ENCODE measurements at regions of chr7 and their contacts with region 1.

Region 1: GRCh38 chr7:39623018-39623731 is at the start of gene RALA:
- DNase-seq: peak; percentile 82 to 94 (median 88)
- ATAC-seq: peak; percentile 92
- H3K4me3 ChIP-seq: peak within 1 kb of the TSS; percentile 81
- H3K4me3 Mint-ChIP-seq: peak within 1 kb of the TSS; percentile 97
- H3K27ac ChIP-seq: peak within 1 kb of the TSS; percentile 82 to 85
- H3K27ac Mint-ChIP-seq: peak within 1 kb of the TSS; percentile 86
- H3K4me1 ChIP-seq: peaks cover 27% of the 10 kb centered on the region
- H3K4me1 Mint-ChIP-seq: peaks cover 52% of the 10 kb centered on the region
- H3K27me3 ChIP-seq: no peaks in the 10 kb centered on the region
- H3K27me3 Mint-ChIP-seq: no peaks in the 10 kb centered on the region
- CTCF ChIP-seq: no peak
- total RNA-seq, gene RALA: 24.5 to 27.5 TPM

Region 2: DNA sequence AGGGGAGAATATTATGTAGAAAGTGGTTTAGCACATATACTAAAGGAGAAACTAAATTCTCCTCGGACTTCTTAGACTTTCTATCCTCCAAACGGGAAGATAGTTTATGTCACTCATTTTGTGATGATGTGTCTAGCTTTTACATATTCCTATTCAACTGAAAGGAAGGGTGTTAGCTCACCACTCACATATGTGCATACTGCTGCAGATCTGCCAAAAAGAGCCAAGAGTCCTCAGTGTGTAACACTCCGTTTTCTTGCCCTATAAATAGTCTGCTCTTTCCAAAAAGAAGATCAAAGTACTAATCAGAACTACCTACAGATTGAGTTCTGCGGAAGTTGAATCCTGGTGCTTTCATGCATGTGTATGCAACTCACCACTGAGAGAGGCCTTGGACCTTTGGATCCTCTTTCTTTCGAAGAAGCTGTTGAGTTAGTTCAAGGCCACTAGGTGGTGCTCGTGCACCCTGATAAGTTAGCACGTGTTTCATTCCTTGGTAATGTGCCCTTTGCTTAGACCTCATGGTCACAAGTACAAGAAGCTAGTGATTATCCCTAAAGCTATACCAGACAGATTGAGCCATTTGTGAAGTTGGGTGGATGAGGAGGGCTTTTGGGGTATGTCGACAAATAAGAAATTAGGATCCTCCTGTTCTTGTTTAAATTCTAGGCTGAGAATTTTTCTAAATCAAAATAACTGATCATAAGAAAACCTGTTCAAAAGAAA is 42.9 kb before region 1 on chr7:
- CTCF ChIA-PET with region 1: interaction called, 22 read pairs
- POLR2A ChIA-PET with region 1: interaction called, 20 read pairs
- intact Hi-C with region 1: loop called in 1 of 2 experiments (anchors 5 kb)
- DNase-seq: peak; percentile 60 to 92 (median 70)
- ATAC-seq: peak; percentile 96
- H3K4me3 ChIP-seq: no peak overlapping the region
- H3K4me3 Mint-ChIP-seq: no peak overlapping the region
- H3K27ac ChIP-seq: no peak overlapping the region
- H3K27ac Mint-ChIP-seq: no peak overlapping the region
- H3K4me1 ChIP-seq: no peaks in the 10 kb centered on the region
- H3K4me1 Mint-ChIP-seq: peaks cover 9% of the 10 kb centered on the region
- H3K27me3 ChIP-seq: no peaks in the 10 kb centered on the region
- H3K27me3 Mint-ChIP-seq: no peaks in the 10 kb centered on the region
- CTCF ChIP-seq: peak; percentile 75

Region 3: GRCh38 chr7:39589323-39590111 is 33.7 kb before region 1 on chr7:
- CTCF ChIA-PET with region 1: interaction called, 5 read pairs
- POLR2A ChIA-PET with region 1: interaction called, 5 read pairs
- intact Hi-C with region 1: loop called (anchors 1 to 5 kb)
- DNase-seq: peak in 13 of 14 experiments; percentile 24 to 89 (median 46)
- ATAC-seq: peak; percentile 82
- H3K4me3 ChIP-seq: no peak overlapping the region
- H3K4me3 Mint-ChIP-seq: peak overlapping the region; percentile 2
- H3K27ac ChIP-seq: no peak overlapping the region
- H3K27ac Mint-ChIP-seq: peak overlapping the region; percentile 52
- H3K4me1 ChIP-seq: peaks cover 12% of the 10 kb centered on the region
- H3K4me1 Mint-ChIP-seq: peaks cover 27% of the 10 kb centered on the region
- H3K27me3 ChIP-seq: no peaks in the 10 kb centered on the region
- H3K27me3 Mint-ChIP-seq: no peaks in the 10 kb centered on the region
- CTCF ChIP-seq: no peak

Region 4: DNA sequence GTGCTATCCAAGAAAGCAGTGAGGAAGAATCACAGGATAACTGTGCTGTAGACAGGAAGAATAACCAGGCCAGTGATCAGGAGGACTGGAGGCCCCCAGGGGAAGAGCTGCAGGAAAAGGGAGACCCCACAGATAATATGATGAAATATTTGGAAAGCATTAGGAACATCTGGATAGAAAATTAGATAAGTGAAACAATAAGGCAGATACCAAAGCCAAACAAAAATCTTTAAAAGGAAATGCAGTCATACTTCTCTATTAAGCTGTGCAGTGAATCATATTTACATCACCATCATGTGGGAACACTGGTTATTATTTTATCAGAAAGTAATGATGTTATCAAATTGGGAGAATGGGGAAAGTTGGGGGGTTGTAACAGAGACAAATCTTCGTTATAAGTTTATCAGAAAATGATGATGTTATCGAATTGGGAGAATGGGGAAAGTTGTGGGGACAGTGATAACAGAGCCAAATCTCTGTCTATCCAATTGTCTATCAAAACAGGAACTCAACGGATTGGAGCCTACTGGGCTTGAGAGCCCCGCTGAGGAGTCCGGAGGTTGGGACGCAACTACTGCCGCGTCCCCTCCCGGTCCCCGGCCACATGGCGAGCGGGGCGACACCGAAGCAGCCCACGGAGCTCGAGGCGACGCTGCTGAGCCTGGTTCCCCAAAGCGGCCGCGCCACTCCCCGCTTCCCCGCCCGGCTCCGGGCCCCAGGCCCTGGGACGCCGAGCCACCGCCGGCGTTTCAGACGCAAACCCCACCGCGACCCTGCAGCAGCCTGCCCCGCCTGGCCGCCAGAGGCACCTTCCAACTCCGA is 13.9 kb before region 1 on chr7:
- CTCF ChIA-PET with region 1: interaction called, 8 read pairs
- POLR2A ChIA-PET with region 1: interaction called, 16 read pairs
- intact Hi-C with region 1: no loop called
- DNase-seq: peak in 6 of 14 experiments; percentile 11 to 47 (median 41)
- ATAC-seq: peak; percentile 52
- H3K4me3 ChIP-seq: peak overlapping the region; percentile 24
- H3K4me3 Mint-ChIP-seq: peak overlapping the region; percentile 67
- H3K27ac ChIP-seq: no peak overlapping the region
- H3K27ac Mint-ChIP-seq: no peak overlapping the region
- H3K4me1 ChIP-seq: peaks cover 10% of the 10 kb centered on the region
- H3K4me1 Mint-ChIP-seq: peaks cover 56% of the 10 kb centered on the region
- H3K27me3 ChIP-seq: peaks cover 4 to 8% of the 10 kb centered on the region in 2 experiments
- H3K27me3 Mint-ChIP-seq: peaks cover 21% of the 10 kb centered on the region
- CTCF ChIP-seq: no peak

Region 5: DNA sequence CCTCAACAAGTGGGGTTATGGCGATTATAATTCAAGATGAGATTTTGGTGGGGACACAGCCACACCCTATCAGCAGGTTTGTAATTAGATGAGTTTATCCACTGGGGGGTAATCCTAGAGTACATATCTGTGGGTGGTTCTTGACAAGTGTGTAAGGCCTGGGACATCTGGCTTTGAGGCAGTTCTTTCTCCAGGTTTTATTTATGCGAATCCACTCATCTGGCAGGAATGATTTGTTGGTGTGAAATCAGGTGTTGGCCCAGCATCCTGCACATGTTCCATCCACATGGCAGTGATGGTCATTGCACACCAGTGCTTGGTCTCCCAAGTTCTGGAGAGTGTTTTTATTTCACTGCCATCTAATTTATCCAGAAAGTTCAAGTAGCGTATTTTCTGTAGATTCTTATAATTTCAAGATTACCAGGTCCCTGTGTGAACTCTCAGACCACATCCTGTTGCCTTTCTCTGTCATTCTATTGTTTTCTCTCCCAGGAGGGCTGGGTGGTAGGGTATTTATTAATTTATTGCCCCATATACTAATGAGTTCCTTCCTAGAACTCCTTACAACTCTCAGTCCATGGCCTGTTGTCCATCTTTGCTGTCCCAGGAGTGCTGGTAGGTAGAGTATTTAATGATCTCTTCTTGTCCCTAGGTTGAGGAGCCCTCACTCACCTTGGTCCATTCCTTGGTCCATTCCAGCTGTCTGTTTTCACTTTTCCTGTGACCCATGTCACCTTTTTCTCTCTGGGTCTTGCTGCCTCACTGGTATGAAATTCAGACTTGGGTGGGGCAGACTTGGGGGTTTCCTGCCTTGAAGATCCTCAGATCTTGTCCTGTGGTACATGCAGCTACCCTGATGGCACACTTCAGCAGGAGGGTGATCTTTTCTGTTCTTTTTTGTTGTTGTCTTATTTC is 10.6 kb after region 1 on chr7:
- CTCF ChIA-PET with region 1: no interaction called
- POLR2A ChIA-PET with region 1: interaction called, 38 read pairs
- intact Hi-C with region 1: loop called in 1 of 2 experiments (anchors 1 kb)
- DNase-seq: peak in 12 of 14 experiments; percentile 17 to 77 (median 32)
- ATAC-seq: peak; percentile 88
- H3K4me3 ChIP-seq: peak overlapping the region; percentile 6
- H3K4me3 Mint-ChIP-seq: peak overlapping the region; percentile 74
- H3K27ac ChIP-seq: peak overlapping the region; percentile 71 to 80
- H3K27ac Mint-ChIP-seq: peak overlapping the region; percentile 96
- H3K4me1 ChIP-seq: peaks cover 35% of the 10 kb centered on the region
- H3K4me1 Mint-ChIP-seq: peaks cover 74% of the 10 kb centered on the region
- H3K27me3 ChIP-seq: no peaks in the 10 kb centered on the region
- H3K27me3 Mint-ChIP-seq: no peaks in the 10 kb centered on the region
- CTCF ChIP-seq: no peak

Region 6: GRCh38 chr7:39656415-39656814 is 33.2 kb after region 1 on chr7:
- CTCF ChIA-PET with region 1: no interaction called
- POLR2A ChIA-PET with region 1: no interaction called
- intact Hi-C with region 1: no loop called
- DNase-seq: no peak
- ATAC-seq: no peak
- H3K4me3 ChIP-seq: no peak overlapping the region
- H3K4me3 Mint-ChIP-seq: no peak overlapping the region
- H3K27ac ChIP-seq: no peak overlapping the region
- H3K27ac Mint-ChIP-seq: no peak overlapping the region
- H3K4me1 ChIP-seq: no peaks in the 10 kb centered on the region
- H3K4me1 Mint-ChIP-seq: peaks cover 41% of the 10 kb centered on the region
- H3K27me3 ChIP-seq: no peaks in the 10 kb centered on the region
- H3K27me3 Mint-ChIP-seq: no peaks in the 10 kb centered on the region
- CTCF ChIP-seq: no peak

Region 7: DNA sequence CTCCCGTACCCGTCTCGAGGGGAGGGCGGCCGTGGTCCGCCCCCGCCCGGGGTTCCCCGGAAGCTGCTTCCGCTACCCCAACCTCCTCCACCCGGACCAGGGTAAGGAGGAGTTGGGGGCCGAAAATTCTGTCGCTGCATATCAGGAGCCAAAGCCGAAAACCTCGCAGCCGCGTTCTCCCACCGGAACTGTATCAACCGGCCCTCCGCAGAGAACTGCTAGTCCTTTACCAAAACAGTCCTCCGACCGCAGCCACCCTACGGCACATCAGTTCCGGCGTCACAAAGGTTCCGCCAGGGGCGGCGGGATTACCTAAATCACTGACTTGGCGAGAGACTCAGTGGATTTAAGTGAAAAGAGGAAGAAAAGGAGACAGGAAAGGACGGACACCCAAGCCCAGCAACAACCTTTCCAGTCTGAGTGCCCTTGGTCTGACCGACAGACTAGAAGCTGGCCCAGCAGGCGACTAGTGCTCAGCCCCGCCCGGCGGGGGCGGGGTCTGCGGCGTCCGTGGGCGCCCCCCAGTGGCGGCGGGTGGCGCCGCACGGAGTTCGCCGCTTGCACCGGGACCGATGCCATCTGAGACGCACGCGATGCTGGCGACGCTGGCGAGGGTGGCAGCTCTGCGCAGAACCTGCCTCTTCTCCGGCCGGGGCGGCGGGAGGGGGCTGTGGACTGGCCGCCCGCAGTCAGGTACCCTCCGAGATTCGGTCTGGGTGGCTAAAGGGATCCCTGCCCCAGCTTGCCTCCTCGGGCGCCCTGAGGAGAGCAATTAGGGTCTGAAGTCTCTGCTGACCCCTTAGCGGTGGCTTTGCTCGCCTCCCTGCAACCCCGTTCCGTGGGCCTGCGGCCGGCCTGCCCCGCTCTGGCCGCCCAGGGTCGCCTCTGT is 511.5 kb after region 1 on chr7 and contains the starts of genes MPLKIP and SUGCT:
- CTCF ChIA-PET with region 1: interaction called, 5 read pairs
- POLR2A ChIA-PET with region 1: interaction called, 3 read pairs
- intact Hi-C with region 1: loop called in 1 of 2 experiments (anchors 2 kb)
- DNase-seq: peak; percentile 77 to 94 (median 84)
- ATAC-seq: peak; percentile 89
- H3K4me3 ChIP-seq: peak within 1 kb of the TSS; percentile 92
- H3K4me3 Mint-ChIP-seq: peak within 1 kb of the TSS; percentile 100
- H3K27ac ChIP-seq: peak within 1 kb of the TSS; percentile 86 to 89
- H3K27ac Mint-ChIP-seq: peak within 1 kb of the TSS; percentile 97
- H3K4me1 ChIP-seq: peaks cover 15% of the 10 kb centered on the region
- H3K4me1 Mint-ChIP-seq: peaks cover 43% of the 10 kb centered on the region
- H3K27me3 ChIP-seq: no peaks in the 10 kb centered on the region
- H3K27me3 Mint-ChIP-seq: peaks cover 3% of the 10 kb centered on the region
- CTCF ChIP-seq: peak; percentile 95
- total RNA-seq, gene MPLKIP: 14.3 to 14.9 TPM
- total RNA-seq, gene SUGCT: 0.95 to 1.2 TPM

Region 8: DNA sequence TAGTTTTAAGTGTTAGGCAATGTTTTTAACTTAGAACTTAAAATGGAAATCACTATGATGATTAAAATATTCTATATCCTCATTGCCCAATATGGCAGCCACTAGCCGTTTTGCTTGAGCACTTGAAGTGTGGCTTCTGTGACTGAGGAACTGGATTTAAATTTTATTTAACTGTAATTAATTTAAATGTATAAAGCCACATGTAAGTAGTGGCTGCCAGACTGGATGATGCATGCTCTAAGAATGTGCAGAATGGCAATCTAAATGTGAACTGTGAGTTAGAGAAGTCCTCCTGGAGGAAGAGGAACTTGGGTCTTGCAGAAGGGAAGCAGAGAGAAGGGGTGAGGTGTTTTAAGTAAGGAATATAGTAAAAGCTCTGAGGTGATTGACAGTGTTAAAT is 963.0 kb after region 1 on chr7:
- CTCF ChIA-PET with region 1: no interaction called
- POLR2A ChIA-PET with region 1: no interaction called
- intact Hi-C with region 1: no loop called
- DNase-seq: no peak
- ATAC-seq: no peak
- H3K4me3 ChIP-seq: no peak overlapping the region
- H3K4me3 Mint-ChIP-seq: no peak overlapping the region
- H3K27ac ChIP-seq: no peak overlapping the region
- H3K27ac Mint-ChIP-seq: no peak overlapping the region
- H3K4me1 ChIP-seq: no peaks in the 10 kb centered on the region
- H3K4me1 Mint-ChIP-seq: no peaks in the 10 kb centered on the region
- H3K27me3 ChIP-seq: no peaks in the 10 kb centered on the region
- H3K27me3 Mint-ChIP-seq: no peaks in the 10 kb centered on the region
- CTCF ChIP-seq: no peak

Measured in CD4-positive, alpha-beta T cell (primary cell).